ENCODE measurements at regions of chr3 and their contacts with region 1.

Region 1: GRCh38 chr3:146503461-146504202 is 34.3 kb upstream of the PLSCR2 start:
- DNase-seq: peak; percentile 92
- H3K4me3 ChIP-seq: peak overlapping the region in 2 of 3 experiments; percentile 7 to 29
- H3K27ac ChIP-seq: peak overlapping the region; percentile 94
- H3K4me1 ChIP-seq: peaks cover 43% of the 10 kb centered on the region
- H3K27me3 ChIP-seq: no peaks in the 10 kb centered on the region
- CTCF ChIP-seq: peak; percentile 16 to 19

Region 2: GRCh38 chr3:146469150-146470017 is 34.2 kb before region 1 on chr3 and contains the start of gene PLSCR2:
- CTCF ChIA-PET with region 1: no interaction called
- dilution Hi-C with region 1: no loop called
- in situ Hi-C with region 1: no loop called
- intact Hi-C with region 1: loop called (anchors 5 kb)
- DNase-seq: no peak
- H3K4me3 ChIP-seq: peak within 1 kb of the TSS; percentile 11 to 54 (median 51)
- H3K27ac ChIP-seq: no peak within 1 kb of the TSS
- H3K4me1 ChIP-seq: peaks cover 15% of the 10 kb centered on the region
- H3K27me3 ChIP-seq: no peaks in the 10 kb centered on the region
- CTCF ChIP-seq: no peak
- total RNA-seq, gene PLSCR2: not detected

Region 3: DNA sequence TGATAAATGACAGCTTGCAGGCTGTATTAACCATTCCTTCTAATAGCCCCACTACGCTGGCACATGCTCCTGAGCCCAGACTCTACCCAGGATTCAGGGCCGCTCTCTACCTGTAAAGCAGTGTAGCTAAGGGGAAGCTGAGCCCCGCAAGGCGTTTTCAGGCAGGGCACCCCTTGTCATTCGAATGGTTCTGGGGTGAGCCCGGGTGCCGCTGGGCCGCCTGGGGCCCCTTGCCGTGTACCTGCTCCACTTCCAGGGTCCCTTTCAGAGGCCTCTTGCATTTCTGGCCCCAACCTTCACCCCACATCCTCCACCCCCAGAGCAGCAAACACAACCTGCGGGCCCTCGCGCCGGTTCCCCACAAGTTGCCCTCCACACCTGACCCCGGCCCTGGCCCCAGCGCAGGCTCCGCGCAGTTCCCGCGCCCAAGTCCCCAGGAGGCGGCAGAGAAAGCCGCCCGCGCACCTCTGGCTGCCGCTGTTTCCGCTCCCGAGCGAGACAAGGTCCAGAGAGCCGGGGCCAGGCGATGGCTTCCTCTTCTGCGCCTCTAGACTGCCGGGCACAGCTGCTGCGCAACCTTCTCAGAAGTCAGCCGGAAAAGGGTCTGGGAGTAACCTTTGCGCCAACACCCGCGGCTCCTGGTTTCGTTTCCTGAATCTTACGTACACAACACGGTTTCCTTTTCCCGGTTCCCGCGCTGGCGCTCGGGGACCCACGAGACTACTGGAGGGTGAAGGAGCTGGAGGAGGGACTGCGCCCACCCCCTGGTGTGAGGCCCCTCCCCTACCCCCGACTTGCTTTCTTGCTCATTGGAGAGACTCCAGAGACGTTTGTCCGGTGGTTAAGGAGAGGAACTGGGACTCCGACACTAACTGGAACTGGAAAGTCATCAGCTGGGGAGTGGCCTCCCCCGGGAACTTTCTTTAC is 40.6 kb after region 1 on chr3 and contains the start of gene PLSCR1:
- CTCF ChIA-PET with region 1: no interaction called
- dilution Hi-C with region 1: loop called (anchors 5 kb)
- in situ Hi-C with region 1: no loop called
- intact Hi-C with region 1: loop called (anchors 1 kb)
- DNase-seq: peak; percentile 98
- H3K4me3 ChIP-seq: peak within 1 kb of the TSS; percentile 55 to 82 (median 65)
- H3K27ac ChIP-seq: peak within 1 kb of the TSS; percentile 86
- H3K4me1 ChIP-seq: peaks cover 37% of the 10 kb centered on the region
- H3K27me3 ChIP-seq: no peaks in the 10 kb centered on the region
- CTCF ChIP-seq: peak in 1 of 2 donors; percentile 3
- total RNA-seq, gene PLSCR1: 23.0 to 53.8 TPM

Measured in mammary epithelial cell (primary cell).